A673 (cell line): ENCODE measurements at regions of chr11 and their contacts with region 1.

Region 1: GRCh38 chr11:33808228-33808828 is 34.0 kb upstream of the FBXO3 start:
- DNase-seq: peak; percentile 98
- H3K4me3 ChIP-seq: no peak overlapping the region
- H3K27ac ChIP-seq: no peak overlapping the region
- H3K4me1 ChIP-seq: peaks cover 4% of the 10 kb centered on the region
- H3K27me3 ChIP-seq: no peaks in the 10 kb centered on the region
- CTCF ChIP-seq: peak; percentile 100

Region 2: GRCh38 chr11:33280411-33280810 is 527.9 kb before region 1 on chr11:
- CTCF ChIA-PET with region 1: no interaction called
- POLR2A ChIA-PET with region 1: no interaction called
- intact Hi-C with region 1: no loop called
- DNase-seq: no peak
- H3K4me3 ChIP-seq: no peak overlapping the region
- H3K27ac ChIP-seq: no peak overlapping the region
- H3K4me1 ChIP-seq: no peaks in the 10 kb centered on the region
- H3K27me3 ChIP-seq: no peaks in the 10 kb centered on the region
- CTCF ChIP-seq: no peak

Region 3: GRCh38 chr11:33857933-33858371 is 49.6 kb after region 1 on chr11:
- CTCF ChIA-PET with region 1: no interaction called
- POLR2A ChIA-PET with region 1: no interaction called
- intact Hi-C with region 1: no loop called
- DNase-seq: peak; percentile 97
- H3K4me3 ChIP-seq: no peak overlapping the region
- H3K27ac ChIP-seq: peak overlapping the region; percentile 24
- H3K4me1 ChIP-seq: peaks cover 65% of the 10 kb centered on the region
- H3K27me3 ChIP-seq: no peaks in the 10 kb centered on the region
- CTCF ChIP-seq: peak; percentile 100

Region 4: GRCh38 chr11:34468209-34468841 is 660.0 kb after region 1 on chr11:
- CTCF ChIA-PET with region 1: interaction called, 3 read pairs
- POLR2A ChIA-PET with region 1: no interaction called
- intact Hi-C with region 1: loop called (anchors 5 kb)
- DNase-seq: peak; percentile 86
- H3K4me3 ChIP-seq: no peak overlapping the region
- H3K27ac ChIP-seq: no peak overlapping the region
- H3K4me1 ChIP-seq: peaks cover 10% of the 10 kb centered on the region
- H3K27me3 ChIP-seq: no peaks in the 10 kb centered on the region
- CTCF ChIP-seq: peak; percentile 100